H1 (cell line): ENCODE measurements at regions of chr4 and their contacts with region 1.

Region 1: DNA sequence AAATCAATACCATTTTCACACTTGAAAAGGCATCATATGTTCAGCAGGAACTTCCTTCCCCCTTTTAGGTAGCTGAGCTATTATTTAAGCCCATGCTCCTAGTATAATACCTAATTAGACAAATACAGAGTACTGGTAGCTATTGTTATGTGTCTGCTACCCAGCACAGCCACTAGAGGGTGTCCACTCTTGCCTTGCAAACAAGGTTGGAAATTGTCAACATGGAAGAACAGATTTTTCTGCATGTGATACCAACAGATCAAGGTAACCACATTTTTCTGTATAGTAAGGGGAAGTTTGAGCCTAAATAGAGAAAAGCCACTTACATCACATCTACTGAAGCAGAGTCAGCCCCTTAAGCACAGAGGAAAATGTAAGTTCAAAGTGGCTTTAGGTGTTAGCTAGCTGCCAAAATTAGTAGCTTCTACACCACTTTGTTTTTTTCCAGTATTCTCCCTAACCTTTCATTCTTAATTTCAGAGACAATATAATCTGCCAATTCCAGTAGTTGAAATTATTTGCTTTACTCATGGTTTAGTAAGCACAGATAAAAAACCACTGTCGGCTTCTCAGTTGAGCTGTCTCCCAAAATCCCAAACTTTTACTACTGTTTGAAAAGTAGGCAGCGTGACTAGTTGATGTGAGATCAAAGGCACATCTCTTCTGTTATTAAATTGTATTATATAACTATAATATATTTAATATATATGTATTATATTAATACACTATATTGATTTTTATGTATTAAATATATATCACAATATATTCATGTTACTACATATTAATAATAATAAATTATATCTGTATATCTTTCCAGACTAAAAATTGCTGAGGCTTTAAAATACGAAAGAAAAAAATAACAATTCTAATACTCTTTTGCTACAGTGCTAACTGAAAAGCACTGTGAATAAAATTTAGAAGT is 38.2 kb downstream of the EDNRA start:
- DNase-seq: peak in 1 of 2 experiments; percentile 59
- H3K4me3 ChIP-seq: no peak overlapping the region
- H3K27ac ChIP-seq: no peak overlapping the region
- H3K4me1 ChIP-seq: no peaks in the 10 kb centered on the region
- H3K27me3 ChIP-seq: no peaks in the 10 kb centered on the region
- CTCF ChIP-seq: peak in 2 of 3 experiments; percentile 75 to 90; a peak in 3 of 4 replicates
- EP300 ChIP-seq: no peak
- POLR2A ChIP-seq: no peak
- RAD21 ChIP-seq: peak; percentile 78 to 79

Region 2: DNA sequence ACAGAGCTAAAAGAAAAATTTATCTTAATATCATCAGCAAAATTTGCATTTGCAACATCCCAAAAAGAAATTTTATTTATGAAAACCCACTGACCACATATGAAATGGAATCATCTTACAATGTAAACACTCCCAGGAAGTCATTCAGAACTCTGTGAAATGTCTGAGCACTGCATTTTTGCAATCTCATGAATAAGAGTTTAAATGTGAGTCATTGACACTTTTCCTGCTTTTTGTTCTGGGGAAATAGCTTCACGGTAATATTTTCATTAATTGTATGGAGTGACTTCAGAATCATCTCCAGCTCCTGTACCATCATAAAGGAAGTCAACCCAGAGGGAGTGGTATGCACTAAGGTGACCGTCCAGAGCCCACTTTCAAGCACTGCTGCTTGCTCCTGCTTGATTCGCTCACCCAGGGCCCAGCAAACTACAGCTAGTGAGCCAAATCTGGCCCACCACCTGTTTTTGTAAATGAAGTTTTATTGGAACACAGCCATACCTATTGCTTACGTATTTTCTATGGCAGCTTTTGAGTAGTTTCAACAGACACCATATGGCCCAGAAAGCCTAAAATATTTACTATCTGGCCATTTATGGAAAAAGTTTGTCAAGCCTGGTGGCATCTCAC is 21.0 kb before region 1 on chr4:
- CTCF ChIA-PET with region 1: interaction called, 11 read pairs
- POLR2A ChIA-PET with region 1: no interaction called
- DNase-seq: no peak
- H3K4me3 ChIP-seq: no peak overlapping the region
- H3K27ac ChIP-seq: no peak overlapping the region
- H3K4me1 ChIP-seq: no peaks in the 10 kb centered on the region
- H3K27me3 ChIP-seq: no peaks in the 10 kb centered on the region; a peak in 1 of 7 replicates
- CTCF ChIP-seq: no peak
- EP300 ChIP-seq: no peak
- POLR2A ChIP-seq: no peak
- RAD21 ChIP-seq: no peak

Region 3: GRCh38 chr4:147566762-147567161 is 47.7 kb after region 1 on chr4:
- CTCF ChIA-PET with region 1: interaction called, 11 read pairs
- POLR2A ChIA-PET with region 1: no interaction called
- DNase-seq: no peak
- H3K4me3 ChIP-seq: no peak overlapping the region
- H3K27ac ChIP-seq: no peak overlapping the region
- H3K4me1 ChIP-seq: 0 out of 7 replicates have a peak, but pooled peaks cover 0 to 6% (median 0%) of the 10 kb centered on the region in 4 experiments
- H3K27me3 ChIP-seq: no peaks in the 10 kb centered on the region
- CTCF ChIP-seq: no peak
- EP300 ChIP-seq: no peak
- POLR2A ChIP-seq: no peak
- RAD21 ChIP-seq: no peak

Region 4: GRCh38 chr4:147581601-147582350 is 62.7 kb after region 1 on chr4:
- CTCF ChIA-PET with region 1: interaction called, 10 read pairs
- POLR2A ChIA-PET with region 1: interaction called, 5 read pairs
- DNase-seq: peak in 1 of 2 experiments; percentile 13
- H3K4me3 ChIP-seq: no peak overlapping the region
- H3K27ac ChIP-seq: no peak overlapping the region
- H3K4me1 ChIP-seq: no peaks in the 10 kb centered on the region; a peak in 1 of 7 replicates
- H3K27me3 ChIP-seq: no peaks in the 10 kb centered on the region
- CTCF ChIP-seq: no peak
- EP300 ChIP-seq: no peak
- POLR2A ChIP-seq: no peak
- RAD21 ChIP-seq: no peak